PC-3 (cell line): ENCODE measurements at regions of chr7 and their contacts with region 1.

Region 1: DNA sequence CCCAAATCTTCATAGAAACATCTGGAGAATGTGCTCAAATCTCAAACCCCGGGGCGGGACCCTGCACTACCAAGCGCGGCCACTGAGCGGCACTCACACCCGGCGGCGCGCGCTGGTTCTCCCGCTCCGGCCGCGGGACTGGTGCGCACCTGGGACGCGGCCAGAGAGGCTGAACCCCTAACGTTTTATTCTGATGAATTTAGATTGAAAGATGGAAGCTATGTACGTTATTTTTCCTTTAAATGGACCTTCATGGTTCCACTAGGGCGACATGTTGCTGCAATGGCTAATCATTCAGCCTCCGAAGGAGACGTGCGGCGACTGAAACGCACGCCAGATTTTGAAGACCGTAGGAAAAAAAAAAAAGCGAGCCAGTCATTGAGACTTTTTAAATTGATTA is 107.0 kb upstream of the INSIG1 start:
- DNase-seq: peak; percentile 39
- ATAC-seq: peak; percentile 57
- H3K4me3 ChIP-seq: peak overlapping the region; percentile 12; the same call in 1 of the 2 replicates
- H3K27ac ChIP-seq: no peak overlapping the region
- H3K4me1 ChIP-seq: peaks cover 18% of the 10 kb centered on the region
- H3K27me3 ChIP-seq: no peaks in the 10 kb centered on the region
- CTCF ChIP-seq: peak; percentile 84

Region 2: GRCh38 chr7:155252444-155252887 is 61.8 kb after region 1 on chr7:
- CTCF ChIA-PET with region 1: no interaction called
- POLR2A ChIA-PET with region 1: no interaction called
- intact Hi-C with region 1: loop called (anchors 1 kb)
- DNase-seq: peak; percentile 29
- ATAC-seq: peak; percentile 50
- H3K4me3 ChIP-seq: no peak overlapping the region
- H3K27ac ChIP-seq: no peak overlapping the region
- H3K4me1 ChIP-seq: peaks cover 11% of the 10 kb centered on the region; the same call in 1 of the 2 replicates
- H3K27me3 ChIP-seq: no peaks in the 10 kb centered on the region
- CTCF ChIP-seq: peak; percentile 47; the same call in 1 of the 2 replicates